ENCODE measurements at regions of chr12 and their contacts with region 1.

Region 1: GRCh38 chr12:75480469-75480949 is at the start of gene GLIPR1:
- DNase-seq: peak; percentile 65 to 88
- ATAC-seq: peak; percentile 81 to 88 (median 83)
- H3K4me3 ChIP-seq: peak within 1 kb of the TSS; percentile 84
- H3K4me3 Mint-ChIP-seq: peak within 1 kb of the TSS; percentile 87
- H3K27ac ChIP-seq: peak within 1 kb of the TSS; percentile 90
- H3K27ac Mint-ChIP-seq: peak within 1 kb of the TSS; percentile 95 to 100
- H3K4me1 ChIP-seq: peaks cover 35% of the 10 kb centered on the region
- H3K4me1 Mint-ChIP-seq: peaks cover 70 to 72% of the 10 kb centered on the region in 2 donors
- H3K27me3 ChIP-seq: no peaks in the 10 kb centered on the region
- H3K27me3 Mint-ChIP-seq: peaks cover 0 to 3% of the 10 kb centered on the region in 2 donors
- CTCF ChIP-seq: no peak
- total RNA-seq, gene GLIPR1: 106 to 120 (median 115) TPM

Region 2: GRCh38 chr12:74770552-74770951 is 710.0 kb before region 1 on chr12:
- intact Hi-C with region 1: no loop called
- DNase-seq: no peak
- ATAC-seq: no peak
- H3K4me3 ChIP-seq: no peak overlapping the region
- H3K4me3 Mint-ChIP-seq: no peak overlapping the region
- H3K27ac ChIP-seq: no peak overlapping the region
- H3K27ac Mint-ChIP-seq: no peak overlapping the region
- H3K4me1 ChIP-seq: no peaks in the 10 kb centered on the region
- H3K4me1 Mint-ChIP-seq: no peaks in the 10 kb centered on the region
- H3K27me3 ChIP-seq: no peaks in the 10 kb centered on the region
- H3K27me3 Mint-ChIP-seq: no peaks in the 10 kb centered on the region
- CTCF ChIP-seq: no peak

Region 3: GRCh38 chr12:75390899-75391538 is 89.5 kb before region 1 on chr12 and contains the start of gene GLIPR1L2:
- intact Hi-C with region 1: loop called (anchors 1 kb)
- DNase-seq: peak; percentile 79 to 95
- ATAC-seq: peak; percentile 91 to 97 (median 96)
- H3K4me3 ChIP-seq: peak within 1 kb of the TSS; percentile 70
- H3K4me3 Mint-ChIP-seq: peak within 1 kb of the TSS; percentile 92
- H3K27ac ChIP-seq: peak within 1 kb of the TSS; percentile 87
- H3K27ac Mint-ChIP-seq: peak within 1 kb of the TSS; percentile 92 to 94
- H3K4me1 ChIP-seq: peaks cover 4% of the 10 kb centered on the region
- H3K4me1 Mint-ChIP-seq: peaks cover 43 to 45% of the 10 kb centered on the region in 2 donors
- H3K27me3 ChIP-seq: no peaks in the 10 kb centered on the region
- H3K27me3 Mint-ChIP-seq: peaks cover 0 to 3% of the 10 kb centered on the region in 2 donors
- CTCF ChIP-seq: peak; percentile 69
- total RNA-seq, gene GLIPR1L2: 0.75 to 1.7 (median 1.6) TPM

Region 4: GRCh38 chr12:75427491-75427890 is 53.0 kb before region 1 on chr12:
- intact Hi-C with region 1: no loop called
- DNase-seq: no peak
- ATAC-seq: no peak
- H3K4me3 ChIP-seq: no peak overlapping the region
- H3K4me3 Mint-ChIP-seq: no peak overlapping the region
- H3K27ac ChIP-seq: no peak overlapping the region
- H3K27ac Mint-ChIP-seq: no peak overlapping the region
- H3K4me1 ChIP-seq: no peaks in the 10 kb centered on the region
- H3K4me1 Mint-ChIP-seq: no peaks in the 10 kb centered on the region
- H3K27me3 ChIP-seq: no peaks in the 10 kb centered on the region
- H3K27me3 Mint-ChIP-seq: peaks cover 0 to 3% of the 10 kb centered on the region in 2 donors
- CTCF ChIP-seq: no peak

Region 5: GRCh38 chr12:75437564-75437963 is 42.9 kb before region 1 on chr12:
- intact Hi-C with region 1: loop called (anchors 5 kb)
- DNase-seq: peak in 1 of 2 donors; percentile 72
- ATAC-seq: peak; percentile 78 to 98 (median 96)
- H3K4me3 ChIP-seq: no peak overlapping the region
- H3K4me3 Mint-ChIP-seq: no peak overlapping the region
- H3K27ac ChIP-seq: no peak overlapping the region
- H3K27ac Mint-ChIP-seq: no peak overlapping the region
- H3K4me1 ChIP-seq: peaks cover 7% of the 10 kb centered on the region
- H3K4me1 Mint-ChIP-seq: peaks cover 6% of the 10 kb centered on the region in 2 donors
- H3K27me3 ChIP-seq: no peaks in the 10 kb centered on the region
- H3K27me3 Mint-ChIP-seq: peaks cover 0 to 6% of the 10 kb centered on the region in 2 donors
- CTCF ChIP-seq: peak; percentile 52

Region 6: DNA sequence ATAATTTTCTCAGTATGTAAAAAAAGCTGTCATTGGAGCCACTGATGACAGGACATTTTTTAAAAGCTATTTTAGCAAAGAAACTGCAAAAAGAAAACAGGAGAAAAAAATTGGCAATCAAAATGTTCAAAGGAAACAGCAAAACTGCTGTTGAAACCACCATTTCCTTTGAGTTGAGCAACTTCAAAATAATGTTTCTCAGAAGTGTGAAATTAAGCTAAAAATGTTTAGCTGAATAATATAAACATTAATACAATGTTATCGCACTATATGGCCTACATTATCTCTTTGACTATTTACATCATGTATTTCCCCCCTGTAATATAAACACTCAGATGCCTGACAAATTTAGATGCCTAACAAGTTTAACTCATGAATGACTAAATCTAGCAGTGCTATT is 23.3 kb before region 1 on chr12:
- intact Hi-C with region 1: loop called (anchors 1 kb)
- DNase-seq: peak in 1 of 2 donors; percentile 47
- ATAC-seq: peak; percentile 81 to 85 (median 84)
- H3K4me3 ChIP-seq: no peak overlapping the region
- H3K4me3 Mint-ChIP-seq: peak overlapping the region; percentile 74
- H3K27ac ChIP-seq: peak overlapping the region; percentile 54
- H3K27ac Mint-ChIP-seq: peak overlapping the region; percentile 83 to 86
- H3K4me1 ChIP-seq: peaks cover 13% of the 10 kb centered on the region
- H3K4me1 Mint-ChIP-seq: peaks cover 53 to 55% of the 10 kb centered on the region in 2 donors
- H3K27me3 ChIP-seq: no peaks in the 10 kb centered on the region
- H3K27me3 Mint-ChIP-seq: no peaks in the 10 kb centered on the region
- CTCF ChIP-seq: no peak

Region 7: GRCh38 chr12:75511116-75512048 is 30.9 kb after region 1 on chr12 and contains the start of gene KRR1:
- intact Hi-C with region 1: loop called (anchors 2 kb)
- DNase-seq: peak; percentile 75 to 98
- ATAC-seq: peak; percentile 96 to 97 (median 96)
- H3K4me3 ChIP-seq: peak within 1 kb of the TSS; percentile 81
- H3K4me3 Mint-ChIP-seq: peak within 1 kb of the TSS; percentile 99
- H3K27ac ChIP-seq: peak within 1 kb of the TSS; percentile 80
- H3K27ac Mint-ChIP-seq: peak within 1 kb of the TSS; percentile 98
- H3K4me1 ChIP-seq: peaks cover 4% of the 10 kb centered on the region
- H3K4me1 Mint-ChIP-seq: peaks cover 22 to 30% of the 10 kb centered on the region in 2 donors
- H3K27me3 ChIP-seq: peaks cover 2% of the 10 kb centered on the region
- H3K27me3 Mint-ChIP-seq: no peaks in the 10 kb centered on the region
- CTCF ChIP-seq: no peak
- total RNA-seq, gene KRR1: 101 to 112 (median 106) TPM

Region 8: GRCh38 chr12:75666939-75667334 is 186.4 kb after region 1 on chr12:
- intact Hi-C with region 1: no loop called
- DNase-seq: no peak
- ATAC-seq: no peak
- H3K4me3 ChIP-seq: no peak overlapping the region
- H3K4me3 Mint-ChIP-seq: no peak overlapping the region
- H3K27ac ChIP-seq: no peak overlapping the region
- H3K27ac Mint-ChIP-seq: no peak overlapping the region
- H3K4me1 ChIP-seq: no peaks in the 10 kb centered on the region
- H3K4me1 Mint-ChIP-seq: no peaks in the 10 kb centered on the region
- H3K27me3 ChIP-seq: no peaks in the 10 kb centered on the region
- H3K27me3 Mint-ChIP-seq: peaks cover 0 to 11% of the 10 kb centered on the region in 2 donors
- CTCF ChIP-seq: no peak